ENCODE measurements at regions of chr16 and their contacts with region 1.

Region 1: GRCh38 chr16:25679511-25679910 is 12.2 kb upstream of the HS3ST4 start:
- DNase-seq: no peak
- ATAC-seq: no peak

Region 2: DNA sequence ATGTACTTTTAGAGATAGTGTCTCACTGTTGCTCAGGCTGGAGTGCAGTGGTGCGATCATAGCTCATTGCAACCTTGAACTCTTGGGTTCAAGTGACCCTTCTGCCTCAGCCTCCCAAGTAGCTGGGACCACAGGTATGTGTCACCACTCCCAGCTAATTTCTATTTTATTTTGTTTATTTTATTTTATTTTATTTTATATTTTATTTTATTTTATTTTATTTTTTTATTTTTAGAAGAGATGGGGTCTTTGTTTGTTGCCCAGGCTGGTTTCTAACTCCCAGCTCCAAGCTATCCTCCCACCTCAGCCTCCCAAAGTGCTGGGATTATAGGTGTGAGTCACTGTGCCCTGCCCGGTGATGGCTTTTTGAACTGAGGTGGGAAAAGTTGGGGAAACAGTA is 22.9 kb before region 1 on chr16:
- intact Hi-C with region 1: loop called (anchors 2 kb)
- DNase-seq: no peak
- ATAC-seq: no peak

Region 3: GRCh38 chr16:25707982-25708583 is 28.6 kb after region 1 on chr16:
- intact Hi-C with region 1: no loop called
- DNase-seq: no peak
- ATAC-seq: no peak